HEK293 (cell line): ENCODE measurements at regions of chr15 and their contacts with region 1.

Region 1: DNA sequence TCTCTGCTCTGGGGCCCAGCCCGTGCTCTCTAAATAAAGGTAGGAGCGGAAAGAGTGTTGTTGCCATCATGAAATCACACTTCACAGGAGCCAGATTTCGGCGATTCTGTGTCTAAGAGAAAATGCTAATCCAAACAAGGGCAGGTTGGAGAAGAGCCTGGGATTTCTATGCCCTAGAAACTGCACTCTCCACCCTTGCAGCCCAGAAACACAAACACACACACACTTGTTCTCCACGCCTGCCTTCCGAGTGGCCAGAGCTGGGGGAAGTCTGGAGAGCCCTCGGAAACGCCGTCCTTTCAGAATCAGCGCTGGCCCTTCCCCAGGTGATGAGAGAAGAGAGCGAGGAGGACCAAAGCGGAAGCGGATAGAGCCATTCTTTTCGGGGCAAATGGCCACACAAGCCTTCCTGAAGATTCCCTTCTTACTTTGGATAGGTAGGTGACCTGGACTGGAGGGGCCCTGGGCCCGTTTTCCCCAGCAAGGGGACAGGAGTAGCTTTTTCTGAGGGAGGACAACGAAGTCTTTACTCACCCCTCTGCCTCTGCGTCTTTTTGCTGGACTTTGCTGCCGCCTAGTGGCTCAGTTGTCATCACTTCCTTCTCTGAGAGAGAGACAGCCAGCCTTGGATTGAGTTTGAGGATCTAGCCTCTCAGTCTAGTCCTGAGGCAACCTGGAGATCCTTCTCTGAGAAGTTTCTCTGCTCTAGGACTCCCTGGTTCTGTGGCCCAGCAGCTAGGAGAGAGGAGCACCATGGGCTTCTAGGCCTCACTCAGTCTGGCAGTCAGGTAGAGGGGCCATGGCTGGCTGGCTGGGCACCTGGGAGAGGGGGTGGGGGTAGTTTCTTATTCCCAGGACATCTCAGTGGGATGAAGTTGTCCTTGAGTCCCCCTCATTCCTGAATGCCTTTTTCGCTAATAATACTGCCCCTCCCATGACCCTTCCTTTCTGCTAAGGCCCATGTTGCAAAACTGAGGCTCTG is 37.7 kb downstream of the SENP8 start:
- H3K4me3 ChIP-seq: peak overlapping the region; percentile 9
- H3K27ac ChIP-seq: peak overlapping the region; percentile 25; the same call in 1 of the 2 replicates
- H3K4me1 ChIP-seq: peaks cover 13% of the 10 kb centered on the region
- CTCF ChIP-seq: peak; percentile 98

Region 2: DNA sequence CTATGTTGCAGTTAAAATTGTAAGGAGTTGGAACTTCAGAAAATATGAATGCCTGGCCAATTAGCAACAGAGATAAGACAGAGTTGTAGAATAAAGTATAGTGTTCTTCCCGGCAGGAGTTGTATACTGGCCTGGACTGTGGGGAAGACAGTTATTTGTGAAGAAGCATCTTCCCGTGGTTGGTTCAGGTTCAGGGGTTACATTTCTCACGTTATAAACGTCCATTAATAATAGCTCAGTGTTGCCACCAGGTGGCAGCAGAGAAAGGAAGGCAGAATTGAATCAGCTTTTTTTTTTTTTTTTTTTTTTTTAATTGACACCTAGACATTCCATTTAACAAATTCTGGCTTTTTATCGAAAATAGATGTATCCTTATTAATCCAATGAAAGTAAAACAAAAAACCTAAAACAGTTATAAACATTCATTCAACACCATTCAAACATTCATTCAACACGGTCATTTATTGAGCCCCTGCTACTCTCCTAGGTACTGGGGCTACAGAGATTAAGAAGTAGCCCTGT is 412.0 kb before region 1 on chr15:
- CTCF ChIA-PET with region 1: interaction called, 44 read pairs
- POLR2A ChIA-PET with region 1: no interaction called
- H3K4me3 ChIP-seq: no peak overlapping the region
- H3K27ac ChIP-seq: no peak overlapping the region
- H3K4me1 ChIP-seq: peaks cover 22% of the 10 kb centered on the region
- CTCF ChIP-seq: peak; percentile 70; the same call in 1 of the 2 replicates

Region 3: GRCh38 chr15:71752604-71753289 is 403.2 kb before region 1 on chr15:
- CTCF ChIA-PET with region 1: interaction called, 40 read pairs
- POLR2A ChIA-PET with region 1: no interaction called
- H3K4me3 ChIP-seq: no peak overlapping the region
- H3K27ac ChIP-seq: no peak overlapping the region
- H3K4me1 ChIP-seq: peaks cover 14% of the 10 kb centered on the region
- CTCF ChIP-seq: peak; percentile 47; the same call in 1 of the 2 replicates

Region 4: GRCh38 chr15:71780115-71780976 is 375.6 kb before region 1 on chr15:
- CTCF ChIA-PET with region 1: interaction called, 18 read pairs
- POLR2A ChIA-PET with region 1: no interaction called
- H3K4me3 ChIP-seq: no peak overlapping the region
- H3K27ac ChIP-seq: no peak overlapping the region
- H3K4me1 ChIP-seq: peaks cover 3% of the 10 kb centered on the region; the same call in 1 of the 2 replicates
- CTCF ChIP-seq: peak; percentile 91

Region 5: DNA sequence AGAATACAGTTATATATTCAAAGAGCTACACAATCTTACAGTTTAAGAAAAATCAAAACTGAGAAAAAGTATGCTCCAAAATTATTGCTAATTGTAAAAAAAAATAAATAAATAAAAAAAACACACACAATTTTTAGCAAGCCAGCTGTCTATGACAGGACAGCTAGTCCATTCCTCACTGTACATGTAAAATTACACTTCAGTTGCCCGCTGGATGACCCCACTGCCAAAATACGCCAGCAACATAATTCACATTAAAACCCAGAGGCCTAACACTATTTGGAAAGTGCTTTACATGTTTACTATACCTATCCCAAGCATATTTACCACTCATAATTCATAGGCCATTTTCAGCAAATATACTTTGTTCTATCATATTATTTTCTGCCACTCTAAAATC is 43.8 kb before region 1 on chr15:
- CTCF ChIA-PET with region 1: interaction called, 11 read pairs
- POLR2A ChIA-PET with region 1: no interaction called
- H3K4me3 ChIP-seq: no peak overlapping the region
- H3K27ac ChIP-seq: no peak overlapping the region
- H3K4me1 ChIP-seq: peaks cover 44% of the 10 kb centered on the region
- CTCF ChIP-seq: no peak

Region 6: GRCh38 chr15:72127724-72128322 is 28.1 kb before region 1 on chr15:
- CTCF ChIA-PET with region 1: interaction called, 13 read pairs
- POLR2A ChIA-PET with region 1: no interaction called
- H3K4me3 ChIP-seq: no peak overlapping the region
- H3K27ac ChIP-seq: no peak overlapping the region
- H3K4me1 ChIP-seq: peaks cover 12% of the 10 kb centered on the region
- CTCF ChIP-seq: no peak

Region 7: DNA sequence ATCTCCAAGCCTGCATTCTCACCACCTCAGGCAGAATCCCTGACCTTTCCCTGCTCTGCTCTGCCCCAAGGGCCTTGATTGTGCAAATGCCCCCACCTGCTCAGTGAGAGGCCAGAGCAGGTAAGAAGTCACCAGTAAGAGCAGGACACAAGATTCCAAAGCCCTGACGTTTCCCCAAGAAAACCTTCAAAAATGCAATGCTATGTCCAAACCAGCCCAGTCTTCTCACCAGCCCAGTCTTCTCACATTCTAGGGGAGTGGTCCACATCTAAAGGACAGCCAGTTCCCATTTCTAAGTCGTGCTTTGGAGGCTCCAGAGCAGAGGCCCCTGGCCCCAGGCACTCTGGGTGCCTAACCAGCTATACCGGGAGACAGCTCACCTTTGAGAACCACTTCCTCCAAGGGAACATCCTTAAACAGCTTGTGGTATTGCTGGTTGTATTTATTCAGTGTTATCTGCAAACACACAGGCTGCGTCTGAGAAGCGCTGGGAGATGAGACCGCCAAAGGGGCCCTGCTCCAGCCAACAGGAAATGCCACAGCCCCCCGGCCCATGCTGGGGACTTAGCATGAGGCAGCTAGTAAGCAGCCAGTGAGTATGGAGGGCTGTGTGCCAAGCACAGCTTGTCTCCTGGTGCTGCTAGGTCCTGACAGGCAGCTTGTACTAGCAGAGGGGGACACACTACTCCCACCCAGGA is 12.3 kb after region 1 on chr15:
- CTCF ChIA-PET with region 1: interaction called, 30 read pairs
- POLR2A ChIA-PET with region 1: no interaction called
- H3K4me3 ChIP-seq: no peak overlapping the region
- H3K27ac ChIP-seq: no peak overlapping the region
- H3K4me1 ChIP-seq: peaks cover 3% of the 10 kb centered on the region; the same call in 1 of the 2 replicates
- CTCF ChIP-seq: no peak

Region 8: GRCh38 chr15:72306211-72306785 is 150.4 kb after region 1 on chr15:
- CTCF ChIA-PET with region 1: no interaction called
- POLR2A ChIA-PET with region 1: no interaction called
- H3K4me3 ChIP-seq: no peak overlapping the region
- H3K27ac ChIP-seq: no peak overlapping the region
- H3K4me1 ChIP-seq: no peaks in the 10 kb centered on the region
- CTCF ChIP-seq: no peak